ENCODE measurements at regions of chr11 and their contacts with region 1.

Region 1: GRCh38 chr11:134050541-134051383 is 18.1 kb upstream of the JAM3 start:
- DNase-seq: peak; percentile 70 to 88 (median 76)
- ATAC-seq: peak; percentile 57 to 82 (median 78)
- H3K4me3 ChIP-seq: peak overlapping the region in 9 of 12 donors; percentile 9 to 46 (median 29)
- H3K27ac ChIP-seq: no peak overlapping the region
- H3K4me1 ChIP-seq: peaks cover 0 to 36% (median 10%) of the 10 kb centered on the region in 12 donors
- H3K27me3 ChIP-seq: no peaks in the 10 kb centered on the region
- CTCF ChIP-seq: peak; percentile 88 to 98 (median 94)
- POLR2A ChIP-seq: no peak

Region 2: DNA sequence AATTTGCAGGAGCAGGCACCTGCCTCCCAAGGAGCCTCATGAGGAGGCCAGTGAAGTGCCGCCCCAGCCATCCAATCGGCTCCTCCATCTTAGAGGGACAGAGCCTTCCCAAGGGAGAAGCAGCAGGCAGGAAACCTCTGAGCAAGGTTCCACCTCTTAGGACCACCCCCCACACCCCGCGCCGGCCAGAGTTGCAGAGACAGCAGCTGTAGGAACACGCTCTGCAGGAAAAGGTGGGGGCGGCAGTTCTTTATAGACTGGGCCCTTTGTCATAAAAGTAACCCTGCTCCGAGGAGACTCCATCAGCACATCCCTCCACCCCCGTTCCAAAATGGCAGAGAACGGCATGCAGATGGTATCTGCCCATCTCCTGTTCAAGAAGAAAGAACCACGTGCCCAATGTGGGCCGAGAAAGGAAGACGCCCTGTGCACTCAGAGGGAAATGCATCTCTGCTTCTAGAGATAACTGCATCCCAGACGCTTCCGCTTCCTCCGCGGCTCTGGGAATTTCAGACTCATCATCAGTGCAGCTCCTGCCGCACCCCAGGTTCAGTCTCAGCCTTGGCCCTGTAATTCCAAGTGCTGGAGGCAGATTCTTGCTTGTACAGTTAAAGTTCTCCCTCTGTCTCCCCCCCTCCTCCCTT is 304.0 kb before region 1 on chr11:
- intact Hi-C with region 1: no loop called
- DNase-seq: no peak
- ATAC-seq: no peak
- H3K4me3 ChIP-seq: no peak overlapping the region
- H3K27ac ChIP-seq: no peak overlapping the region
- H3K4me1 ChIP-seq: no peaks in the 10 kb centered on the region
- H3K27me3 ChIP-seq: peaks cover 0 to 13% (median 0%) of the 10 kb centered on the region in 9 donors
- CTCF ChIP-seq: no peak
- POLR2A ChIP-seq: no peak

Region 3: DNA sequence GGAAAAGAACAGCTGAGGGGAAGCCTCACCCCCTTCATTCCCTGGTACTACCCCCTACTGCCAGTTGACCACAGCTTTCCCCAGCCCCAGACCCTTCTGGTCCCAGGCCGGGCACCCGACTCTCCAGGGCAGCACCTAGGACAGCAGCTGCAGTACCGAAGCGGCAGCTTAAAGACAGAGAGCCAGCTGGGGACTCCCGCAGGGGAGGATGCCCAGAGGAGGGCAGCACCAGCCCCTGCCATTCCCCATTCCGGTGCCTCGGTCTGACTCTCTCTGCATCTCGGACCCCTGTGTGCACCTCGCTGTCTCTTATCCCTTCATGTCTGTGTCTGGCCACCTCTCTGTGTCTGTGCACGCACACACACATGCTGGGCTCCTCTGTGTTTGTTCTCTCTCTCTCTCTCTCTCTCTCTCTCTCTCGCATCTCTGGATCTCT is 103.4 kb before region 1 on chr11:
- intact Hi-C with region 1: loop called in 1 of 10 experiments (anchors 5 kb)
- DNase-seq: peak; percentile 64 to 70 (median 67)
- ATAC-seq: peak; percentile 26 to 51 (median 43)
- H3K4me3 ChIP-seq: peak overlapping the region in 6 of 12 donors; percentile 11 to 42 (median 20)
- H3K27ac ChIP-seq: peak overlapping the region in 10 of 12 donors; percentile 27 to 98 (median 77)
- H3K4me1 ChIP-seq: peaks cover 14 to 86% (median 70%) of the 10 kb centered on the region in 12 donors
- H3K27me3 ChIP-seq: no peaks in the 10 kb centered on the region
- CTCF ChIP-seq: peak in 11 of 12 donors; percentile 23 to 64 (median 47)
- POLR2A ChIP-seq: no peak

Region 4: DNA sequence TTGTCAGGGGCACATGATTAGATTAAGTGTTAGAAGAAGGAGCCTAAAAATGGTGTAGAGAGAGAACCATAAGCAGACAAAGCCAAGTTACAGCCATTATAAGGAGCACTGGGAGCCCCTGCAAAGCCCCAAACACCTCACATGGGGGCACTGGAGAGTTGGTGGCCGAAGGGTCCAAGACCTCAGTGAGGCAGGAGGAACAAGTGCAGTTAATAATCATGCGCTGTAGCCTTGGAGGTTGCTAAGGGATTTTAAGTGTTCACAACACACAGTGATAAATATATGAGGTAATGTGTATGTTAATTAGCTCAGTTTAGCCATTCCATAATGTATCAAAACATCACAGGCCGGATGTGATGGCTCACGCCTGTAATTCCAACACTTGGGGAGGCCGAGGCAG is 36.3 kb before region 1 on chr11:
- intact Hi-C with region 1: loop called in 6 of 10 experiments (anchors 1 to 5 kb)
- DNase-seq: peak in 4 of 5 donors; percentile 40 to 62 (median 51)
- ATAC-seq: peak; percentile 87 to 91 (median 88)
- H3K4me3 ChIP-seq: no peak overlapping the region
- H3K27ac ChIP-seq: peak overlapping the region in 2 of 12 donors; percentile 0 to 47
- H3K4me1 ChIP-seq: peaks cover 0 to 12% (median 0%) of the 10 kb centered on the region in 12 donors
- H3K27me3 ChIP-seq: no peaks in the 10 kb centered on the region
- CTCF ChIP-seq: peak in 10 of 12 donors; percentile 36 to 60 (median 47)
- POLR2A ChIP-seq: no peak

Region 5: GRCh38 chr11:134139873-134140331 is 89.1 kb after region 1 on chr11:
- intact Hi-C with region 1: loop called (anchors 1 to 2 kb)
- DNase-seq: peak in 4 of 5 donors; percentile 49 to 69 (median 67)
- ATAC-seq: peak; percentile 81 to 92 (median 88)
- H3K4me3 ChIP-seq: no peak overlapping the region
- H3K27ac ChIP-seq: peak overlapping the region in 5 of 12 donors; percentile 6 to 72 (median 26)
- H3K4me1 ChIP-seq: peaks cover 0 to 17% (median 5%) of the 10 kb centered on the region in 12 donors
- H3K27me3 ChIP-seq: no peaks in the 10 kb centered on the region
- CTCF ChIP-seq: peak; percentile 73 to 97 (median 89)
- POLR2A ChIP-seq: no peak

Measured in heart left ventricle (tissue), 16 donors.